CD4-positive, alpha-beta memory T cell (primary cell): ENCODE measurements at regions of chr2 and their contacts with region 1.

Region 1: DNA sequence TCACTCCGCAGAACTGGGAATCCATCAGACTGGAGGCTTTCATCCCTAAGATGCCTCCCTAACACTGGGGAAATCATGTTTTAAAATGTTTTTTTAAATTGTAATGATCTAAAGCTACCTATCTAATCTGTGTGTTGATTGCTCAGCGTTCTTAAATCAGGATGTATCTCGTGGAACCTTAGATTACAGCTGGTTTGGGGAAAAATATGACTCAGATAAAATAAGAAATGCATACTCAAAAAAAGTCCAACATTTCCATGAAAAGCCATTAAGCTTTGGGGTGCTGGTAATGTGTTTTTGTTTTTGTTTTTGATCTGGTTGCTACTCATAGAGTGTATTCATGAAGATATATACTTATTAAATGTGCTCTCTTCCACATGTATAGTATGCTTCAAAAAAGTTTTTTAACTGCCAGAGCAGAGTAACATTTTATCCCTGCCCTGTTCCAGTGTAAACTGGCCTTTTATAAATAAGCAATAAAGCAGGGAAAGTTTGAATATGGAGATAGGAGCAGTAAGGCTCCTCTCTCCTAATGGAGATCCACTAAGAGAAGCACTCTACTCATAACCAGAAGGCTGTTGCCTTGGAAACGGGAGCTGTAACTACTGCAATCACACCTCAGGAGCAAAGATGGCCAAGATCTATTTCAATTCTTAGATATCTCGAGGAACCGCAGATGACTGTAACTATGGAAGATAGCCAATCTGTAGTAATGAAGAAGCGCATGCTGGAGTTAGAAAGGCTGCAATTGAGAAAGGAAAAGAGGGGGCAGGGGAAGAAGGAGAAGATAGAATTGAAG is 41.6 kb downstream of the ANKRD44 start:
- DNase-seq: peak in 3 of 5 donors; percentile 50 to 81 (median 61)
- H3K4me3 ChIP-seq: no peak overlapping the region
- H3K4me3 Mint-ChIP-seq: peak overlapping the region in 7 of 8 donors; percentile 11 to 64 (median 59)
- H3K27ac ChIP-seq: peak overlapping the region; percentile 35
- H3K27ac Mint-ChIP-seq: peak overlapping the region; percentile 77 to 98 (median 87)
- H3K4me1 ChIP-seq: peaks cover 98% of the 10 kb centered on the region
- H3K4me1 Mint-ChIP-seq: peaks cover 71 to 99% (median 89%) of the 10 kb centered on the region in 4 donors
- H3K27me3 ChIP-seq: no peaks in the 10 kb centered on the region
- H3K27me3 Mint-ChIP-seq: no peaks in the 10 kb centered on the region

Region 2: GRCh38 chr2:197209742-197210408 is 59.1 kb before region 1 on chr2:
- CTCF ChIA-PET with region 1: interaction called, 10 read pairs
- POLR2A ChIA-PET with region 1: interaction called, 19 read pairs
- intact Hi-C with region 1: no loop called
- DNase-seq: peak in 4 of 5 donors; percentile 37 to 86 (median 40)
- H3K4me3 ChIP-seq: peak overlapping the region in 1 of 2 donors; percentile 12
- H3K4me3 Mint-ChIP-seq: peak overlapping the region; percentile 38 to 88 (median 74)
- H3K27ac ChIP-seq: peak overlapping the region; percentile 68
- H3K27ac Mint-ChIP-seq: peak overlapping the region; percentile 88 to 100 (median 98)
- H3K4me1 ChIP-seq: peaks cover 100% of the 10 kb centered on the region
- H3K4me1 Mint-ChIP-seq: peaks cover 84 to 100% (median 93%) of the 10 kb centered on the region in 4 donors
- H3K27me3 ChIP-seq: no peaks in the 10 kb centered on the region
- H3K27me3 Mint-ChIP-seq: peaks cover 0 to 3% of the 10 kb centered on the region in 2 donors

Region 3: DNA sequence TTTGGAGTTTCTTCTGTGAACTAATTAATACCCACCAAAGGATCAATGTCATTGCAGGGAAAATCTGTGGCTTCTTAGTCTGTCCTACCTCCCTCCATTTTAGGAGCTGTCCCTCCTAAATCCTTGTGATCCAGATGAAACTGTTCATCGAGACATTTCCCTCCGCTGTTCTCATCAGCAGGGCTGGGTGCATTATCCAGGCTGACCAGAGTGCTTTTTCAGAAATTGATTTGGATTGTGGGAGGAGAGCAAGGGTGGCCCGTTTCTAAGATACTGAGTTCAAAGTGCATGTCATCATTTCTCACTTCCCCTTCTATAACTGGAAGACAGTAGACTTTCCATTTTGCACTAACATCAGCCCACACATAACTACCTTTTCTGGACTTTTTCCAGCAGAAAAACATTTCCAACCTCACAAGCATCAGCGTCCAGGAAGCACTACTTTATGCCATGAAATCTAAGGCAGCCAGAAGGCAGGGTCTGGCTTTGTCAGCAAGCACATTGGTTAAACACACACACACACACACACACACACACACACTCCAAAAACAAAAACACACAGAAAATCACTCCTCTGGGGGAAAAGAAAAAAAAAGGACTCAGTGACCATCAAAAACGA is 52.5 kb before region 1 on chr2:
- CTCF ChIA-PET with region 1: interaction called, 6 read pairs
- POLR2A ChIA-PET with region 1: interaction called, 10 read pairs
- intact Hi-C with region 1: no loop called
- DNase-seq: no peak
- H3K4me3 ChIP-seq: peak overlapping the region in 1 of 2 donors; percentile 16
- H3K4me3 Mint-ChIP-seq: peak overlapping the region; percentile 62 to 90 (median 75)
- H3K27ac ChIP-seq: peak overlapping the region; percentile 68
- H3K27ac Mint-ChIP-seq: peak overlapping the region; percentile 88 to 99 (median 94)
- H3K4me1 ChIP-seq: peaks cover 92% of the 10 kb centered on the region
- H3K4me1 Mint-ChIP-seq: peaks cover 59 to 89% (median 79%) of the 10 kb centered on the region in 4 donors
- H3K27me3 ChIP-seq: no peaks in the 10 kb centered on the region
- H3K27me3 Mint-ChIP-seq: peaks cover 0 to 3% of the 10 kb centered on the region in 2 donors

Region 4: DNA sequence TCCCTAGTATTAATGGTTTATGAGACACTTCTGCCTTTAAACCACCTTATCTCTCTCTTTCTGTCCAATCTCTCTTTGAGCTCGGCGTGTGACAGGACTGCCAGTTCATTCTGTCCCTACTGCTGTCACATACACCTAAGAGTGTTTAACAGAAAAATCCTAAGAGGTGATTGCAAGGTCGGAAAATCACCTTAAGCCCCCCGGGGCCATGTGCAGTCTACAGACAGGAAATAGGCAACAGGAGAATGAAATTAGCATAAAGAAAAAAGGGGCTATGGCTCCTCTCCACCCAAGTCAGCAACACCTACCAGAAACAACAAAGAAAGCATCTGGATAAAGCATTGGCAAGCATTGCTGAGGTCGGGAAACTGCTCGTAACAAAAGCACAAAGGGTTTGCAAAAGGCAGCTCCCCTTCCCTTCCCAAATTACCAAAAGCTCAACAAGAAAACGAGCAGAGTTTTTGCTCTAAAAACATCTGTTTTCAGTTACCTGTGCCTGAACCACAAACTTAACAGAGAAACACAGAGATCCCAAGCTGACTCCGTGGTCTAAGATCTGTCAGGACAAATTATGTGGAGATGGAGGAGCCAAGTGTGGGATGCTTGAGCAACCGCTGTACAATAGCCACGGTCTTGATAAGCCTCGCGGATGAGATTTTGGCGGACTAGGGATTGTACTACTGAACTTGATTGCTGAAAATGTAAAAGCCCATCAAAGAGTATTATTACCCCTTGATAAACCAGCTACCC is 11.2 kb after region 1 on chr2:
- CTCF ChIA-PET with region 1: interaction called, 9 read pairs
- POLR2A ChIA-PET with region 1: interaction called, 49 read pairs
- intact Hi-C with region 1: no loop called
- DNase-seq: no peak
- H3K4me3 ChIP-seq: peak overlapping the region in 1 of 2 donors; percentile 6
- H3K4me3 Mint-ChIP-seq: peak overlapping the region; percentile 27 to 83 (median 74)
- H3K27ac ChIP-seq: peak overlapping the region; percentile 19
- H3K27ac Mint-ChIP-seq: peak overlapping the region; percentile 70 to 95 (median 87)
- H3K4me1 ChIP-seq: peaks cover 95% of the 10 kb centered on the region
- H3K4me1 Mint-ChIP-seq: peaks cover 63 to 90% (median 75%) of the 10 kb centered on the region in 4 donors
- H3K27me3 ChIP-seq: no peaks in the 10 kb centered on the region
- H3K27me3 Mint-ChIP-seq: no peaks in the 10 kb centered on the region

Region 5: DNA sequence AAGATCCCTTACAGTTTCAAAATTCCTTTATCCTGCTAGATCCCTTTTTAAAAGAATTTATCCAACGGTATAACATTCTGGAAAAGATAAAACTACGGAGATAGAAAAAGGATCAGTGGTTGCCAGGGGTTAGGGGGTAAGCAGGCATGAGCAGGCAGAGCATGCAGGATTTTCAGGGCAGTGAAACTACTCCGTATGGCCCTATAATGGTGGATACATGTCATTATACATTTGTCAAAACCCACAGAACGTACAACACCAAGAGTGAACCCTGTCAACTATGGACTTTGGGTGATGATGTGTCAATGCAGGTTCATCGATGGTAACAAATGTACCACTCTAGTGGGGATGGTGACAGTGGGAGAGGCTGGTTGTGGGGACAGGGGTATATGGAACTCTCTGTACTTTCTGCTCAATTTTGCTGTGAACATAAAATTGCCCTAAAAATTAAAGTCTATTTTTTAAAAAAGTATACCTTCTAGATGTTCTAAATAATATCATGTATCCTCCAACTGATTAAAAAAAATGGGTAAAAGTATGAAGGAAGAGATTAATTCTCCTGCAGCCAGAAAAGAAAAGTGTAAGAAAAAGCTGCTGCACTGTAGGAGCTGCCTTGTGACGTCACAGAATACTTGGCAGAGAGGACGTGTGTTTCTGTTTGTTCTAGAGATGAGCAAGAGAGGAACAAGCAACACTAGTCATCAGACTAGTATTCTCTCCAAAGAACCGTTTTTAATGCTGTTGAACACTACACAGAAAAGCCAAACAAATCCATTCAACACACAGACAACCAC is 18.0 kb after region 1 on chr2:
- CTCF ChIA-PET with region 1: interaction called, 4 read pairs
- POLR2A ChIA-PET with region 1: interaction called, 65 read pairs
- intact Hi-C with region 1: loop called (anchors 2 kb)
- DNase-seq: peak; percentile 66 to 85 (median 76)
- H3K4me3 ChIP-seq: no peak overlapping the region
- H3K4me3 Mint-ChIP-seq: peak overlapping the region; percentile 68 to 85 (median 82)
- H3K27ac ChIP-seq: peak overlapping the region; percentile 22
- H3K27ac Mint-ChIP-seq: peak overlapping the region; percentile 67 to 99 (median 96)
- H3K4me1 ChIP-seq: peaks cover 99% of the 10 kb centered on the region
- H3K4me1 Mint-ChIP-seq: peaks cover 52 to 88% (median 70%) of the 10 kb centered on the region in 4 donors
- H3K27me3 ChIP-seq: no peaks in the 10 kb centered on the region
- H3K27me3 Mint-ChIP-seq: no peaks in the 10 kb centered on the region

Region 6: DNA sequence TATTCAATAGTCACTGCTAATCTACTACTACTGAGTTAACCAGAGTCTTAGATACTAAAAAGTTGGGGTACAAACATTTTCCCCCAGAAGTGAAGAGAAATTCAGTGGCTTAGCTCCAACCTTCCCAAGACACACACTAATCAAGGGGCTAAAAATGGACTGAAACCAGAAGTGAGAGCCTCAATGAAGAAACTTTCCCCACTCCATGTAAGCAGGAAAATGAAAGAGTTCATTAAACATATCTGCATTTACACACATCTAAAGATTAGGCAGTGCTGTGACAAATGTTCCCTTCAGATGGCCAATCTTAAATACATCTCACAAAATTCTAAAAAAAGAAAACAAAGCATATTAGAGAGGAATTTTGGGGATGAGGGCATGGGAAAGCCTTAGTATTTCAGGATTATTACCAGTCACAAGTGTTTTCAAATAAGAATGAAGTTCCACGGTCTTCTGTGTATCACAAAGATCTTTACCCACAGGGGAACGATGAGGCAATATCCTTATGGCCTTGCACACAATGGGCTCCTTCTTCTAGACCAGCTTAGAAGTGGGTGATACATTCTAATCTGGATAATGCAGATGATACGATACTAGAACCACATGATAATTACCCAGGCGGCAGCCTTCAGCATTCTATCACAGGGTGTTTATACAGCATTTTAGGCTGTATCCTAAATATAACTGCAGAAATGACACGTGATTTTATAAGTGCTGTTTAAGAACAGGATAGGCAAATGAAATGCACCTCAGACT is 24.4 kb after region 1 on chr2:
- CTCF ChIA-PET with region 1: interaction called, 4 read pairs
- POLR2A ChIA-PET with region 1: interaction called, 65 read pairs
- intact Hi-C with region 1: no loop called
- DNase-seq: peak; percentile 41 to 79 (median 43)
- H3K4me3 ChIP-seq: peak overlapping the region in 1 of 2 donors; percentile 15
- H3K4me3 Mint-ChIP-seq: peak overlapping the region; percentile 77 to 87 (median 82)
- H3K27ac ChIP-seq: peak overlapping the region; percentile 69
- H3K27ac Mint-ChIP-seq: peak overlapping the region; percentile 90 to 99 (median 96)
- H3K4me1 ChIP-seq: peaks cover 100% of the 10 kb centered on the region
- H3K4me1 Mint-ChIP-seq: peaks cover 69 to 94% (median 84%) of the 10 kb centered on the region in 4 donors
- H3K27me3 ChIP-seq: no peaks in the 10 kb centered on the region
- H3K27me3 Mint-ChIP-seq: no peaks in the 10 kb centered on the region